Right ventricle myocardium inferior (tissue), 1 donor: ENCODE measurements at regions of chr20 and their contacts with region 1.

Region 1: GRCh38 chr20:46132705-46133120 is 14.6 kb downstream of the CD40 start:
- DNase-seq: peak; percentile 88
- ATAC-seq: peak; percentile 85

Region 2: GRCh38 chr20:44702776-44703175 is 1429.9 kb before region 1 on chr20:
- intact Hi-C with region 1: no loop called
- DNase-seq: peak; percentile 92
- ATAC-seq: peak; percentile 89

Region 3: GRCh38 chr20:46174469-46175128 is 41.9 kb after region 1 on chr20:
- intact Hi-C with region 1: loop called (anchors 5 kb)
- DNase-seq: peak; percentile 88
- ATAC-seq: peak; percentile 67

Region 4: GRCh38 chr20:46255429-46256104 is 122.9 kb after region 1 on chr20:
- intact Hi-C with region 1: loop called (anchors 5 kb)
- DNase-seq: peak; percentile 87
- ATAC-seq: peak; percentile 66

Region 5: GRCh38 chr20:46307139-46307998 is 174.7 kb after region 1 on chr20:
- intact Hi-C with region 1: loop called (anchors 1 kb)
- DNase-seq: peak; percentile 81
- ATAC-seq: peak; percentile 35

Region 6: GRCh38 chr20:46330072-46330763 is 197.5 kb after region 1 on chr20:
- intact Hi-C with region 1: loop called (anchors 5 kb)
- DNase-seq: no peak
- ATAC-seq: no peak

Region 7: GRCh38 chr20:46349035-46349741 is 216.5 kb after region 1 on chr20:
- intact Hi-C with region 1: loop called (anchors 2 kb)
- DNase-seq: peak; percentile 80
- ATAC-seq: peak; percentile 76